Activated CD4-positive, alpha-beta memory T cell treated with anti-CD3 and anti-CD28 coated beads for 36 hours (primary cell): ENCODE measurements at regions of chr3 and their contacts with region 1.

Region 1: DNA sequence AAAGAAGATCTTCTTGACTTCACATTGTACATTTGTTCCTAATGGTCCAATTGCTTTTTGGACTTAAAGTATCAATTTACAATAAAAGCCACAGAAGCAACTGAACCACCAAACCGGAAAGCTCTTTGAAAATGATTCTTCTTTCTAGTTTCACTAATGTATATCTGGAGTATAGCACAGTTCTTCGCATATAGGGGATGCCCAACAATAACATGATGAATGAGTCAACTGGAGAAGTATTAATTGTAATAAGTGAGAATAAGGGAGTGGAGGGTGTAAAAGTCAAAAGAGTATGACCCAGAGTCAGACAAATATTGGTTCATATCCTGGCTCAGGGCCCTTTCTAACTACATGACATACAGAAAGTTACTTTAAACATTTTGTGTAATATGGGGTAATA is 425.2 kb downstream of the ZBTB20 start:
- DNase-seq: no peak
- H3K4me3 Mint-ChIP-seq: no peak overlapping the region
- H3K27ac Mint-ChIP-seq: no peak overlapping the region
- H3K4me1 Mint-ChIP-seq: peaks cover 26% of the 10 kb centered on the region
- H3K27me3 Mint-ChIP-seq: no peaks in the 10 kb centered on the region

Region 2: GRCh38 chr3:114504941-114505632 is 216.8 kb before region 1 on chr3:
- CTCF ChIA-PET with region 1: no interaction called
- POLR2A ChIA-PET with region 1: no interaction called
- intact Hi-C with region 1: loop called (anchors 1 kb)
- DNase-seq: no peak
- H3K4me3 Mint-ChIP-seq: no peak overlapping the region
- H3K27ac Mint-ChIP-seq: no peak overlapping the region
- H3K4me1 Mint-ChIP-seq: peaks cover 31% of the 10 kb centered on the region
- H3K27me3 Mint-ChIP-seq: peaks cover 14% of the 10 kb centered on the region

Region 3: GRCh38 chr3:114686621-114687020 is 35.2 kb before region 1 on chr3:
- CTCF ChIA-PET with region 1: no interaction called
- POLR2A ChIA-PET with region 1: no interaction called
- intact Hi-C with region 1: no loop called
- DNase-seq: no peak
- H3K4me3 Mint-ChIP-seq: no peak overlapping the region
- H3K27ac Mint-ChIP-seq: no peak overlapping the region
- H3K4me1 Mint-ChIP-seq: peaks cover 8% of the 10 kb centered on the region
- H3K27me3 Mint-ChIP-seq: no peaks in the 10 kb centered on the region